K562 (cell line): ENCODE measurements at regions of chr2 and their contacts with region 1.

Region 1: DNA sequence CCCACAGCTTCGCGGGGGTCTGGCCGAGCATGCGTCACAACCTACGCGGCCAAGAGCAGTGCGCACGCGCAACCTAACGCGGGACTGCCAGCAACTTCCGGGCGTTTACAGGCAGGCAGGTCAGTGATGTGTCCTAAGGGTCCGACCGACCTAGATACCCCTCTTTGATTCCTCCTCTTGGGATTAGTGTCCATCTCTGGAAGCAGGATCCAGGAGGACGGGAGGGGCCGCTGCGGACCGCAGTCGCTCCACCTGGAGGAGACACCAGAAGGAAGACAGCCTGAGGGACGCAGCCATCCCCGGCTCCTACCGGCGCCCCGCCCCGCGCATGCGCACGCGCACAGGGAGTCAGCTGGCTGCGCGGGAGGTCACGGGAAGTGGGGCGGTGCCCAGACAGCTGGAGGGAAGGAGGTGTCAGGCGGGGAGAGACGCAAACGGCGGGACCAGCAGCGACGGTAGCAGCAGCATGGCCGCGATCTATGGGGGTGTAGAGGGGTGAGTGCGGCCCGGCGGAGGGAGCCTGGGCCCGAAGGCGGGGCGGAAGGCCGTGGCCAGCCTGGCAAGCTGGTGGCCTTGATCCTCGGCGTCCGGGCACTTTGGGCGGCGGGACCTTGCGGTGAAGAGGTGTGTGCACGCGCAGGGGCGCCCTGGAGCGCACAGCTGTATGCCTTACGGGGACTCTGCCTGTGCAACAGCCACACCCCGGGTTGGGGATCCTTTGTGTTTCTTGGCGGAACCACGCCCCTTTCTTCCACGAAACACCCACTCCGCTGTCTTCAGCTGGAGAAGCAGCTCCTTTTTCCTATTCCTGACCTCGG is at the start of gene NAGK:
- DNase-seq: peak; percentile 96 to 99 (median 98)
- ATAC-seq: peak; percentile 92
- H3K4me3 ChIP-seq: peak within 1 kb of the TSS; percentile 53
- H3K27ac ChIP-seq: peak within 1 kb of the TSS; percentile 85
- H3K4me1 ChIP-seq: peaks cover 26 to 35% of the 10 kb centered on the region in 2 experiments
- H3K27me3 ChIP-seq: no peaks in the 10 kb centered on the region
- CTCF ChIP-seq: no peak
- EP300 ChIP-seq: no peak
- POLR2A ChIP-seq: peak; percentile 99
- RAD21 ChIP-seq: peak in 1 of 2 experiments; percentile 22; a peak in 1 of 4 replicates
- polyA plus RNA-seq, gene NAGK: 4.9 to 10.6 TPM

Region 2: DNA sequence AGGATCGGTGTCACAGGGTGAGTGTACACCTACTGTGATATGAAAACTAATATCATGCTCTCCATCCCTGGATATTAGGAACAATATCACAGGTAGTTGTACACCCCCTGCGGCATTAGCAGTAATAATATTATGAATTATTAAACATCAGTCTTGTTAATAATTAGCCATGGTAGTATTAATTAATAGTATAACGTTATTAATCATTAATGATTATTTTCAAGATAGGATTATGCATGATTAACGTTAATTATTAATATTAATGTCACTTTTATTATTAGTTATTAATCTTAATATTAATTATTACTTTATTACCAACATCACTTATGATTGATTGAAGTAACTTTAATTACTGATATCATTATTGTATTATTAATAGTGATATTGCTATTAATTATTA is 26.1 kb before region 1 on chr2:
- CTCF ChIA-PET with region 1: no interaction called
- POLR2A ChIA-PET with region 1: no interaction called
- in situ Hi-C with region 1: no loop called
- intact Hi-C with region 1: no loop called
- DNase-seq: no peak
- ATAC-seq: no peak
- H3K4me3 ChIP-seq: no peak overlapping the region
- H3K27ac ChIP-seq: no peak overlapping the region
- H3K4me1 ChIP-seq: peaks cover 0 to 4% of the 10 kb centered on the region in 2 experiments; a peak in 2 of 5 replicates
- H3K27me3 ChIP-seq: peaks cover 6 to 28% of the 10 kb centered on the region in 2 experiments; a peak in 4 of 5 replicates
- CTCF ChIP-seq: no peak
- EP300 ChIP-seq: no peak
- POLR2A ChIP-seq: no peak
- RAD21 ChIP-seq: no peak

Region 3: DNA sequence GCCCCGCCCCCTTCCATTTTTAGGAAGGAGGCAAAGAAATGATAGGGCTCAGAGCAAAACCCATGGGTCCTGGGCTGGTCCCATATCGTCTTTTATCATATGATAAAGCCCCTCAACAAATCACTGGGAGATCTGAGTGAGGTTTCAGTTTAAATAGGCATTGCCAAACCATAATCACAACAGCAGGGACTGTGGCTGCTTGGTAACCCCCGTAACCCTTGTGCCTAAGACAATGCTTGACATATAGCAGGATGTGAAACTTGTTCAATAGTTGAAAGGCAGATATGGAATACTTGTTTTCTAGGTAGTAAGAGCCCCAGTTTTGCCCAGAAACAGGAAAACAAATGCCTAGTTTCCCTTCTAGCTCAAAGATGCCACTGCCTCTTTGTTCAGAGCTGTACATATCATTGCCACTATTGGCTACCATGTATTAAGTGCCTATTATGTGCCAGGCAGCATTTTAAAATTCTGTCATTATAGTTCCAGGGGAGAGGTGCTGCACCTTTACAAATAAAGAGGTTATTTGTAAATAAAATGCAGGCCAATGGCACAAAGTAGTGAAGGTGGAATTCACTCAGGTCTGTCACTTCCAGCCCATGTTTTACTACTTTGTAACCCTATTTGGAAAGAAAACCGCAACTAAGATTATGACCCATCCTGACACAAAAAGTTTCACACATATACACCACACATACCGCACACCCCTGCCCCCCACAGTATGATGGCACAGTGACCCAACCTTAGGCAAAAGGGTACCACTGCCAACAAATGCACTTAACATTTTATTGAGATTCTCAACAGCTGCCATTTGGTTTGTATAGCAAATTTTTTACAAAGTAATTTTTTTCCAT is 14.2 kb after region 1 on chr2:
- CTCF ChIA-PET with region 1: no interaction called
- POLR2A ChIA-PET with region 1: interaction called, 10 read pairs
- in situ Hi-C with region 1: no loop called
- intact Hi-C with region 1: no loop called
- DNase-seq: no peak
- ATAC-seq: no peak
- H3K4me3 ChIP-seq: no peak overlapping the region
- H3K27ac ChIP-seq: no peak overlapping the region
- H3K4me1 ChIP-seq: no peaks in the 10 kb centered on the region; a peak in 1 of 5 replicates
- H3K27me3 ChIP-seq: no peaks in the 10 kb centered on the region
- CTCF ChIP-seq: no peak
- EP300 ChIP-seq: no peak
- POLR2A ChIP-seq: no peak
- RAD21 ChIP-seq: no peak

Region 4: GRCh38 chr2:71130113-71130904 is 61.9 kb after region 1 on chr2 and contains the starts of genes MCEE and MPHOSPH10:
- CTCF ChIA-PET with region 1: no interaction called
- POLR2A ChIA-PET with region 1: no interaction called
- in situ Hi-C with region 1: no loop called
- intact Hi-C with region 1: loop called (anchors 2 kb)
- DNase-seq: peak; percentile 80 to 96 (median 84)
- ATAC-seq: peak; percentile 95
- H3K4me3 ChIP-seq: peak within 1 kb of the TSS; percentile 75
- H3K27ac ChIP-seq: peak within 1 kb of the TSS; percentile 90
- H3K4me1 ChIP-seq: peaks cover 7 to 12% of the 10 kb centered on the region in 2 experiments; a peak in 3 of 5 replicates
- H3K27me3 ChIP-seq: no peaks in the 10 kb centered on the region
- CTCF ChIP-seq: no peak
- EP300 ChIP-seq: peak; percentile 28; the same call in 1 of the 2 replicates
- POLR2A ChIP-seq: peak; percentile 88
- RAD21 ChIP-seq: no peak; a peak in 1 of 4 replicates
- polyA plus RNA-seq, gene MCEE: 43.8 to 49.1 TPM
- polyA plus RNA-seq, gene MPHOSPH10: 36.8 to 56.3 TPM

Region 5: GRCh38 chr2:71243634-71244304 is 175.3 kb after region 1 on chr2:
- CTCF ChIA-PET with region 1: no interaction called
- POLR2A ChIA-PET with region 1: no interaction called
- in situ Hi-C with region 1: no loop called
- intact Hi-C with region 1: no loop called
- DNase-seq: no peak
- ATAC-seq: no peak
- H3K4me3 ChIP-seq: no peak overlapping the region
- H3K27ac ChIP-seq: no peak overlapping the region
- H3K4me1 ChIP-seq: no peaks in the 10 kb centered on the region
- H3K27me3 ChIP-seq: peaks cover 0 to 6% of the 10 kb centered on the region in 2 experiments; a peak in 2 of 5 replicates
- CTCF ChIP-seq: no peak
- EP300 ChIP-seq: no peak
- POLR2A ChIP-seq: no peak
- RAD21 ChIP-seq: no peak

Region 6: GRCh38 chr2:71452565-71452964 is 384.1 kb after region 1 on chr2:
- CTCF ChIA-PET with region 1: no interaction called
- POLR2A ChIA-PET with region 1: no interaction called
- in situ Hi-C with region 1: no loop called
- intact Hi-C with region 1: loop called (anchors 5 kb)
- DNase-seq: peak; percentile 85 to 89 (median 88)
- ATAC-seq: peak; percentile 93
- H3K4me3 ChIP-seq: no peak overlapping the region
- H3K27ac ChIP-seq: no peak overlapping the region; the same call in 2 of the 3 replicates
- H3K4me1 ChIP-seq: peaks cover 20 to 31% of the 10 kb centered on the region in 2 experiments
- H3K27me3 ChIP-seq: no peaks in the 10 kb centered on the region
- CTCF ChIP-seq: peak; percentile 55 to 74 (median 62)
- EP300 ChIP-seq: peak; percentile 28; the same call in 1 of the 2 replicates
- POLR2A ChIP-seq: no peak
- RAD21 ChIP-seq: peak in 1 of 2 experiments; percentile 51; a peak in 2 of 4 replicates